IMR-90 (cell line): ENCODE measurements at regions of chr17 and their contacts with region 1.

Region 1: GRCh38 chr17:75784473-75785015 is at the start of gene UNK:
- DNase-seq: peak; percentile 100
- ATAC-seq: peak; percentile 81
- H3K4me3 ChIP-seq: peak within 1 kb of the TSS; percentile 54
- H3K27ac ChIP-seq: peak within 1 kb of the TSS; percentile 97
- H3K4me1 ChIP-seq: peaks cover 16% of the 10 kb centered on the region
- H3K27me3 ChIP-seq: no peaks in the 10 kb centered on the region
- CTCF ChIP-seq: no peak
- POLR2A ChIP-seq: peak; percentile 79
- RAD21 ChIP-seq: no peak
- total RNA-seq, gene UNK: 15.4 and 15.8 TPM in 2 replicates

Region 2: DNA sequence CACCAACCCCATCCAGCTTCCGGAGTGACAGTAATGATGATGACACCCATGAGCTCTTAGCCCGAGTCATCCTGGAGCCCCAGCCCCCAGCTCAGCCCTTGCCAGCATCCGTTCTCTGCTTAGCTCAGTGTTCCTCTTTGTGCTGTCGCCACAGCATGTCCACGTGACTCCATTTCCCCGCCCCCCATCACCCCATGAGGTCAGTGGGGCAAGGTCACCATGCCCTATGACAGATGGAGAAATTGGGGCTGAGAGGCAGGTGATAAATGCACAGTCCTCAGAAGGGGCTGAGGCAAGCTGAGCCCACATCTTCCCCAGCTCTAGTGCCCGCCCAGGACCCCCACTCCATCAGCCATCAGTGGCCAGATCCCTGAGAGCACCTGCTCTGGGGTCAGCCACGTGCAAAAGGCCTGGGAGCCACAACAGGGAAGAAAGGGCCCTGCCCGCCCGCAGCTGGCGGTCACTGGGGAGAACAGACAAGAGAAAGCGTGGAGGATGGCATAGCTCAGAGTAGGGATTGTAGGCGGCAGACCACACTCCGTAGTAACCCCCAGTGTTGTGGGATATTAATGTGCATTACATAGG is 46.2 kb before region 1 on chr17:
- CTCF ChIA-PET with region 1: no interaction called
- POLR2A ChIA-PET with region 1: no interaction called
- dilution Hi-C with region 1: no loop called
- in situ Hi-C with region 1: no loop called
- intact Hi-C with region 1: no loop called
- DNase-seq: peak; percentile 27
- ATAC-seq: no peak; the same call in 1 of the 2 replicates
- H3K4me3 ChIP-seq: no peak overlapping the region
- H3K27ac ChIP-seq: no peak overlapping the region
- H3K4me1 ChIP-seq: no peaks in the 10 kb centered on the region
- H3K27me3 ChIP-seq: peaks cover 2% of the 10 kb centered on the region; the same call in 1 of the 2 replicates
- CTCF ChIP-seq: no peak
- POLR2A ChIP-seq: no peak
- RAD21 ChIP-seq: no peak

Region 3: GRCh38 chr17:75827252-75828115 is 42.9 kb after region 1 on chr17:
- CTCF ChIA-PET with region 1: interaction called, 4 read pairs
- POLR2A ChIA-PET with region 1: interaction called, 3 read pairs
- dilution Hi-C with region 1: no loop called
- in situ Hi-C with region 1: no loop called
- intact Hi-C with region 1: loop called (anchors 5 kb)
- DNase-seq: peak; percentile 41
- ATAC-seq: peak; percentile 93
- H3K4me3 ChIP-seq: no peak overlapping the region
- H3K27ac ChIP-seq: no peak overlapping the region
- H3K4me1 ChIP-seq: peaks cover 3% of the 10 kb centered on the region
- H3K27me3 ChIP-seq: no peaks in the 10 kb centered on the region
- CTCF ChIP-seq: peak; percentile 67
- POLR2A ChIP-seq: no peak
- RAD21 ChIP-seq: peak; percentile 60

Region 4: GRCh38 chr17:75877752-75878173 is 93.2 kb after region 1 on chr17:
- CTCF ChIA-PET with region 1: interaction called, 4 read pairs
- POLR2A ChIA-PET with region 1: interaction called, 4 read pairs
- dilution Hi-C with region 1: no loop called
- in situ Hi-C with region 1: no loop called
- intact Hi-C with region 1: loop called (anchors 10 kb)
- DNase-seq: peak; percentile 71
- ATAC-seq: peak; percentile 74
- H3K4me3 ChIP-seq: peak overlapping the region; percentile 46
- H3K27ac ChIP-seq: peak overlapping the region; percentile 75
- H3K4me1 ChIP-seq: peaks cover 21% of the 10 kb centered on the region
- H3K27me3 ChIP-seq: peaks cover 3% of the 10 kb centered on the region
- CTCF ChIP-seq: peak; percentile 60
- POLR2A ChIP-seq: peak; percentile 32; the same call in 1 of the 2 replicates
- RAD21 ChIP-seq: peak; percentile 30